PC-3 (cell line): ENCODE measurements at regions of chr10 and their contacts with region 1.

Region 1: DNA sequence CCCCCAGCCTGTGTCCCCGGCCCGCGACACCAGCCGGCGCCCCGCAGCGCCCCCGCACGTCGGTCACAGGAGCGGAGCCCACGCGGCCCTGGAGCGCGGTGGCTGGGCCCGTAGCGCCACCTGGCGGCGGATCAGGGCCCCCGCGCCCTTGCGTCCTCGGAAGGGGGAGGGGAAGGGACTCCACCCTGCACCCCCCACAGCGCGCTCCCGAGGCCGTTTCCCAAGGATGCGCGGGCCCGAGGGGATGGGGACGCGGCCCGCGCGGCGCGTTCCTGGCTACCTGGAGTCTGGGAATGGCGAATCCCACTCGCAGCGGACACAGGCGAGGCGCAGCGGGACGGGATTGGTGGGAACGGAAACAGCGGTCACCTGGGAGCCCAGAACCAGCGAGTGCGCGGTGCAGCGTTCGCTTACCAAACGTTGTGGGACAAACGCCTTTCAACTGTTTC is 23.8 kb upstream of the MKI67 start:
- DNase-seq: peak; percentile 69
- ATAC-seq: peak; percentile 99
- H3K4me3 ChIP-seq: peak overlapping the region; percentile 69
- H3K27ac ChIP-seq: no peak overlapping the region
- H3K4me1 ChIP-seq: 0 out of 2 replicates have a peak, but pooled peaks cover 4% of the 10 kb centered on the region
- H3K27me3 ChIP-seq: no peaks in the 10 kb centered on the region
- CTCF ChIP-seq: peak; percentile 69

Region 2: DNA sequence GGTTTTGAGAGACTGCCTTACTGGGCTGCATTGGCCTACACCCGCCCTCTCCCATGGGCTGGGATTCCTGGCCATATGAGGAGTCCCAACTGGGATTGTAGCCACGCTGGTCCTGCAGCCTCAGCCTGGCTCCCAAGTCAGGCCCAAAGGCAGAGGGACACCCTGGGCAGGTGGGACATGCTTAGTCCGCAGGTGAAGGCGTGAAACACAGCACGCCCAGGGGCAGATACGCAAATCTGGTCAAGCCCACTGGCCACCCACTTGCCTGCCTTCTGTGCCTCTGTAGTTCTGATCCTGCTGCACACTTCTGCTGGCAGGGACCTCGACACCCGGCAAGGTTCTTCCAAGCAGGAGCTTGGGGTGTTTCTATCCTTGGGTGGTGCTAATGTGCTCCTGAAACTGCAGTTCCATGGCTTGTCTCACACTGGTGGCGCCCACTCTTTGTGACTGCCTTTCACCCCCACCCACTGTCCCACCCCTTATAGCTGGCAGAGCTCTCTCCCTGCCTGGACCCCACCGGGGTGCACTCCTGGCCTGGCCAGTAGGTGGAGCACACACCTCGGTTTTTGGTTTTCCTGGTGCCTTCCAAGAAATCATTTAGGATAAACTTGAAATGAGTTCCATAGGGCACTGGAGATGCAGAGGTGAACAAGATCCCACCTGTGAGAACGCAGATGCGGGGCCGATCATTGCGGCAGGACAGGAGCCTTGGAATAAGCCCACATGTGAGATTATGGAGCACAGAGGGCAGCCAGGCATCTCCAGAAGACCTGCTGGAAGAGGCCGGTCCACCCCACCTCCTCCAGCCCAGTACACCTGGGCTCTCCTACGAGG is 71.7 kb before region 1 on chr10:
- CTCF ChIA-PET with region 1: interaction called, 4 read pairs
- POLR2A ChIA-PET with region 1: no interaction called
- intact Hi-C with region 1: loop called (anchors 1 kb)
- DNase-seq: peak; percentile 60
- ATAC-seq: peak; percentile 83
- H3K4me3 ChIP-seq: no peak overlapping the region
- H3K27ac ChIP-seq: no peak overlapping the region
- H3K4me1 ChIP-seq: no peaks in the 10 kb centered on the region
- H3K27me3 ChIP-seq: no peaks in the 10 kb centered on the region
- CTCF ChIP-seq: peak; percentile 72